ENCODE measurements at regions of chr9 and their contacts with region 1.

Region 1: DNA sequence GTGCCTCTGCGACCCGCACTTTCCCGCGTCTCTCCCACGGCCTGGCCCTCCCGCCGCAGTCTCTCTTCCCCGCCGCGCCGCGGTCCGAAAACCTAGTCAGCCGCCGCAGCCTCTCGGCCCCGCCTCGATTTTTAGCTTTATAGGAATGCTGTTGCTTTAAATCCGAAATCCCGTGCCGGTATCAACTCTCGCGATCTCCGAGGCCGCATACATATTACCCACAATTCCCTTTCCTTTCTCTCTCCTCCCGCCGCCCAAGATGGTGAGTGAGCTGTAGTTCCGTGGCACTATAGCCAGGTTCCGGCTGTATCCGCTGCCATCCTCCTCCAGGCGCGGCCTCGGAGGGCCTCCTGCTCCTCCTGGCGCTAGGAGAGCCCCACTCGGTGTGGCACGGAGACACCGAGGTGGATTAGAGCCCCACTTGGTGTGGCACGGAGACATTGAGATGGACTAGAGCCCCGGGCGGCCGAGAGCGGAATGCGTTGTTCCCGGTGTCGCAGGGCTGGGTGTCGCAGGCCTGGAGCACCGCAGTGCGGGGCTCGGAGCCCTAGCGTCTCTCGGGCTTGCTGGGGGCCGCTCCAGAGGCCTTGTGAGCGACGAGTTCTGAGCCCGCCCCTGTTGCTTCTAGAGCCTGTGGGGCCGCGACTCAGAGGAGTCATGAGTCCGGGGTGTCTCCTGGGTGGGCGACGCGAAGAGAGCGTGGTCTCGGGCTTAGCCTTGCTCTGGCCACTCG is at the starts of genes MED22 and RPL7A:
- DNase-seq: peak; percentile 97
- H3K4me3 Mint-ChIP-seq: peak within 1 kb of the TSS; percentile 100
- H3K27ac Mint-ChIP-seq: peak within 1 kb of the TSS; percentile 95
- H3K4me1 Mint-ChIP-seq: peaks cover 39% of the 10 kb centered on the region
- H3K27me3 Mint-ChIP-seq: peaks cover 2% of the 10 kb centered on the region
- total RNA-seq, gene MED22: 39.5 and 45.0 TPM in 2 replicates
- total RNA-seq, gene RPL7A: 2,650 and 2,658 TPM in 2 replicates

Region 2: DNA sequence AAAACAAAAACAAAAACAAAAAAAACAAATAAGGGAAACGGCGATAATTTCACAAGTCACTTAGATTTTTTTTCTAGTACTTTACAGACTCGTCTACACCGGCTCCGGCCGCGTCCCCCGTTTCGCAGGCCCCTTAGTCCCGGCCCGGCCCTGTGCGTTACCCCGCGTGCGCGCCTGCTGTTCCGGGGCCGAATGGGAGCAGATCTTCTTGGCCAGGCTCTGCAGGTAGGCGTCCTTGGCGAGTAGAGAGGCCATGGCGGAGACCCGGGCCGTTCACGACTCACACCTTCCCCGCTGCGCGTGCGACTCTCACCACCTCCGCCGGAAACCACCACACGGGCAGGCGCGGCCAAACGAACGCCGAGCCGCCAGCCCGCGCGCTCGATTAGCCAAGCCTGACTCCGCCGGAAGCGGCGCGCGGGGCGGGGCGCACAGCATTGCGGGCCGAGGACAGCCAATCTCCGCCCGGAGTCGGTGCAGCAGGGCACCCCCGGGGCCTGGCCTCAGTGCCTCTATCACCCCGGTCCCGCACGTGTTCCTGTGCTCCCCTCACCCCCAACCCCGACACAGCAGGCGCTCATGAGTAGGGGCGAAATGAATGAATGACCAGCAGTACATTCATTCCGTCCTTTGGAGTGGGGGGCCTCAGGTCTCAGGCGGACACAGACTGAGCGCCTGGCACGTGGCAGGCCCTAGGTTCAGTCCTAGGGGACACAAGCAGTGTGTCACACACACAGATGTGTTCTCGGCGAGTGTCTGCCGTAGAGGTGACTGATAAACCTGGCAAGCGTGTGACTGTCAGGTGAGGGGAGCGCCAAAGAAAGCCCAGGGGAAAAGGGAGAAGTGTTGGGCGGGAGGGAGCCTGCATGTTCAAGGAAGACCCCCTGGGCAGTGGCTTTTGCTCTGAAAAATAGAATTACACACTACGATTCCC is 12.0 kb before region 1 on chr9 and contains the start of gene SURF6:
- intact Hi-C with region 1: loop called (anchors 1 kb)
- DNase-seq: peak; percentile 99
- H3K4me3 Mint-ChIP-seq: peak within 1 kb of the TSS; percentile 89
- H3K27ac Mint-ChIP-seq: peak within 1 kb of the TSS; percentile 90
- H3K4me1 Mint-ChIP-seq: peaks cover 18% of the 10 kb centered on the region
- H3K27me3 Mint-ChIP-seq: no peaks in the 10 kb centered on the region
- total RNA-seq, gene SURF6: 27.4 and 28.8 TPM in 2 replicates

Measured in activated CD4-positive, alpha-beta T cell treated with anti-CD3 and anti-CD28 coated beads, Interleukin-2, amount 10 ng/mL, durations not matched to agents 24 days and 14 days (primary cell).